ENCODE measurements at regions of chr11 and their contacts with region 1.

Region 1: DNA sequence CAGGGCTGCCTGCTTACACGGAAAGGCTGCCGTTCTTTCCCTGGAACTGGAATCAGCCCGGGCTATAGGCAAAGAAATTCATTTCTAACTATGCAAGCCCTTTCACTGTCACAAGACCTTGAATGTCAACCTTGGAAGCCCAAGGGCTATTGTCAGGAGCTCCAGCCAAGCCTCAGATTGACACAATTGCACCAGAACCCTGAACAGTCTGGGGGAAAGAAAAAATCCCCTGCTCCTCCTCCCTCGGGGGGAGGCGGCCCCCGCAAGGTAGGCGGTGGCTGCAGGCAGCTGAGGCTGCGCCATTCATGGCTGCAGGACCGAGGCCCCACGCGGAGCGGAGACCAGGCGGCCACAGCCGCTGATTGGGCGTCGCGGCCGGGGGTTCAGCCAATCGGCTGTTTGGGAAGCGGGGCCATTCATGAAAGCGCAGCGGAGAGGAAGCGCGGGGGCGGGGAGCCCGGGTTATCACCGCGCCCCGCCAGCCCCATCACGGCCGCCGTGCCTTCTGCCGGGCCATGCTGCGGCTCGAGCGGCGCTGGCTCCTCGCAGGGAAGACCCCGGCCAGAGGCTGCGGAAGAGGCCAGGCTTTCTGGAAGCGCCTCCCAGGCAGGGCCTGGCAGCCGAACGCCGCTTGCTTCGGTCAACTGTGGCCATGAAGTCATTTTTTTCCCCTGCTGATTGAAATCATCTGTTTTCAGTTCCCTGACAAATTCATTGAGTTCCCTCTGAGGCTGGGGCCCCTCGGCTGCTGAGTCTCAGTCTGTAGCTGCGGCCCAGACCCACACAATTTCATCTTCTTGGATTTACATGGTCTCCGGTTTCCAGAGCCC is 38.1 kb upstream of the LINC01488 start:
- DNase-seq: peak; percentile 33 to 91
- H3K4me3 ChIP-seq: peak overlapping the region; percentile 38 to 61
- H3K27ac ChIP-seq: peak overlapping the region; percentile 50 to 52
- H3K4me1 ChIP-seq: peaks cover 6 to 13% of the 10 kb centered on the region in 2 donors
- H3K27me3 ChIP-seq: no peaks in the 10 kb centered on the region
- CTCF ChIP-seq: no peak

Region 2: DNA sequence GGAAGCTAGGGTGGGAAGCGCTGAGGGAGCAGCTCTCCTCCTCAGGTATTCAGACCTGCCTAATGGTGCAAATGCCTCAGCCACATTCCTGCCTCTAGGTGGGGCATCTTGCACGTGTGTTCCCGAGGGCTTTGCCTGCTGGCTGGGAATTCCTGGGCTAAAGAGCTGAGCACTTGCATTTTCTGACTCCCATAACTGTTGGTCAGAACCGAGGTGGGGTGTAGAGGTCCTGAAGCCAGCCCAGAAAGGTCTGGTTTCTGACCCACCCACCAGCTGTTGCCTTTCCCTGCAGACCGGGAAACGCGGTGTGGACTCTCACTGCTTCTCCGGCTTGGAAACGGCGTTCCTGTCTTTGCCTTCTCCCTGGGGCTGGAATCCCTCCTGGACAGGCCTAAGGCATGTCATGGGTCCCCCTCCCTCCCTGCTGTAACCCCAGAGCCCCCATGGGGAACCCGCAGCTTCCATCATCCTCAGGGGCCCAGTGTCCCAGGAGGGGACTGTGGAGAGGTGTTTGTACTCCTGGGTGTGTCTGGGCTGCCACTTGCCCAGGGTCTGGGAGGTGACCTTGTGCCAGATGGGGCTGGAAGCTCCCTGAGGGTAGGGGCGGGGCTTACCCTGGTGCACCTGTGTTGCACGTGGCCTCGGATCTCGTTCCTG is 311.6 kb before region 1 on chr11:
- intact Hi-C with region 1: loop called (anchors 5 kb)
- DNase-seq: peak; percentile 26 to 84
- H3K4me3 ChIP-seq: no peak overlapping the region
- H3K27ac ChIP-seq: peak overlapping the region; percentile 72 to 73
- H3K4me1 ChIP-seq: peaks cover 0 to 21% of the 10 kb centered on the region in 2 donors
- H3K27me3 ChIP-seq: no peaks in the 10 kb centered on the region
- CTCF ChIP-seq: peak; percentile 85 to 89 (median 86)

Region 3: DNA sequence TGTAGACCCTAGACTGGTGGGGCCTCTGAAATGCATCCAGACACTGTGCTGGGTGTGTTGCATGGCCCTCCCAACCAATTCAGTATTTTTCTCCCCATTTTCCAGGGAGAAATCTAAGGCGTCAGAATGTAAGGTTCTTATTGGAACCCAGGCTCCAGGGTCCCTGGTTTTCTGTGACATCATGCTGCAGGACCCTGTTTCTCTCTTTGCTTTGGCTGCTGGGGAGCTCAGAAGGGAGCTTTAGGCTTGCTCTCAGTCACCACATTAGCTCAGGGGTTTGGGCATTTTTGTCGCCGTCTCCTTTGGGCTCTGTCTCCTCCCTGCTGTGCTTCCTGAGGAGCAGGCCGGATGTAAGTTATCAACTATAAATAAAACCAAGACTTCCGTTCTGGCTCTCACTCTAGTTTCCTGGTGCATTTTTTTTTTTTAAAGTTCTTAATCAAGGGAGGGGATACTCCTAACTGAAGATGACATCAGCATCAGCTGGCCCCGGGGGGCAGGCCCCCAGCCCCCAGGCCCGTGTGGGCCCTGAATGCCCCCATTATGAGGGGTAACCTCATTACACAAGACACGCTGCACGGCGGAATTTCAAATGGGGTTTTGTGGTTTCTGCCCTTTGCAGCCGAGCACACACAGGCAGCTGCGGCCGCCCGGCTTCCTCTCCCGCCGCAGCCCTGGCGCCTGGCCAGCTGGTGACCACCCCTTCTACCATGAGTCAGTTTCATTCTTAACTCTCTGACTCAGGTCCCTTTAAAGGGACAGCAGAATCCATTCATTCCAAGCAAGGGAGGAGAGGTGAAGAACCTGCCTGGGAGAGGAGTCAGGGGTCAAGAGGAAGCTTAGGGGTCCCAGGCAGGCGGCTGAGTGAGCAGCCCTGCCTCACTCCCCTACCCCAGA is 146.2 kb before region 1 on chr11:
- intact Hi-C with region 1: loop called (anchors 1 kb)
- DNase-seq: peak; percentile 85 to 98
- H3K4me3 ChIP-seq: peak overlapping the region in 1 of 2 donors; percentile 39
- H3K27ac ChIP-seq: peak overlapping the region; percentile 85 to 93
- H3K4me1 ChIP-seq: peaks cover 25 to 36% of the 10 kb centered on the region in 2 donors
- H3K27me3 ChIP-seq: no peaks in the 10 kb centered on the region
- CTCF ChIP-seq: no peak

Region 4: DNA sequence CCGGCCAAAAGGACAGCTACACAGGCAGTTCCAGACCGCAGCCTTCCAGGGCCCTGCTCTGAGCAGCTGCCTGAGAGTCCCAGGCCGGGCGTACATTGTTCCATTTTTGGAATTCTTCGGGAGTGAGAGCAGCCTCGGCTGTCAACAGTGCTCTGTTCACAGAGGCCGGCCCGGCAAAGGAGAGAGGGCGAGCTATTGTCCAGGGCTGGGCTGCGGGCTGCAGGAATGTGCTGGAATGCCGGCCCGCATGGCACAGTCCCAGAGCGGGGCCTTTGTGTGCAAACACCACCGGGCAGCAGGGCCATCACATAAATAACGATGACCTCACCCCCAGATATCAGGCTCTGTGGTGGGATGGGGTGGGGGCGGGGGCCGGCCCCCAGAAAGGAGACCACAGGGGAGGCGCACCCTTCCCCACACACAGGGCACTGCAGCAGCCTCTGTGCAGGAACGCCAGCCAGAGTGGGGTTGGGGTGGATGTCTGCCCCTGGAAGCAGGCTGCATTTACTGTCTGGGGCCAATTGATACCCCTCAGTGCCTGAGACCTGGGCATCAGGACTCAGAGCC is 54.0 kb after region 1 on chr11:
- intact Hi-C with region 1: loop called (anchors 2 kb)
- DNase-seq: peak in 1 of 2 donors; percentile 91
- H3K4me3 ChIP-seq: no peak overlapping the region
- H3K27ac ChIP-seq: peak overlapping the region; percentile 63 to 77
- H3K4me1 ChIP-seq: peaks cover 10 to 23% of the 10 kb centered on the region in 2 donors
- H3K27me3 ChIP-seq: no peaks in the 10 kb centered on the region
- CTCF ChIP-seq: no peak

Region 5: GRCh38 chr11:69540118-69540502 is 96.8 kb after region 1 on chr11:
- intact Hi-C with region 1: loop called (anchors 5 kb)
- DNase-seq: peak; percentile 34 to 90
- H3K4me3 ChIP-seq: peak overlapping the region in 1 of 2 donors; percentile 40
- H3K27ac ChIP-seq: peak overlapping the region; percentile 74 to 89
- H3K4me1 ChIP-seq: peaks cover 13 to 35% of the 10 kb centered on the region in 2 donors
- H3K27me3 ChIP-seq: no peaks in the 10 kb centered on the region
- CTCF ChIP-seq: peak; percentile 34 to 39 (median 38)

Region 6: GRCh38 chr11:69636312-69637197 is 193.2 kb after region 1 on chr11:
- intact Hi-C with region 1: loop called (anchors 2 kb)
- DNase-seq: peak in 1 of 2 donors; percentile 83
- H3K4me3 ChIP-seq: peak overlapping the region; percentile 51 to 88
- H3K27ac ChIP-seq: peak overlapping the region; percentile 18 to 69
- H3K4me1 ChIP-seq: peaks cover 9 to 37% of the 10 kb centered on the region in 2 donors
- H3K27me3 ChIP-seq: no peaks in the 10 kb centered on the region
- CTCF ChIP-seq: no peak